ENCODE measurements at regions of chr4 and their contacts with region 1.

Region 1: DNA sequence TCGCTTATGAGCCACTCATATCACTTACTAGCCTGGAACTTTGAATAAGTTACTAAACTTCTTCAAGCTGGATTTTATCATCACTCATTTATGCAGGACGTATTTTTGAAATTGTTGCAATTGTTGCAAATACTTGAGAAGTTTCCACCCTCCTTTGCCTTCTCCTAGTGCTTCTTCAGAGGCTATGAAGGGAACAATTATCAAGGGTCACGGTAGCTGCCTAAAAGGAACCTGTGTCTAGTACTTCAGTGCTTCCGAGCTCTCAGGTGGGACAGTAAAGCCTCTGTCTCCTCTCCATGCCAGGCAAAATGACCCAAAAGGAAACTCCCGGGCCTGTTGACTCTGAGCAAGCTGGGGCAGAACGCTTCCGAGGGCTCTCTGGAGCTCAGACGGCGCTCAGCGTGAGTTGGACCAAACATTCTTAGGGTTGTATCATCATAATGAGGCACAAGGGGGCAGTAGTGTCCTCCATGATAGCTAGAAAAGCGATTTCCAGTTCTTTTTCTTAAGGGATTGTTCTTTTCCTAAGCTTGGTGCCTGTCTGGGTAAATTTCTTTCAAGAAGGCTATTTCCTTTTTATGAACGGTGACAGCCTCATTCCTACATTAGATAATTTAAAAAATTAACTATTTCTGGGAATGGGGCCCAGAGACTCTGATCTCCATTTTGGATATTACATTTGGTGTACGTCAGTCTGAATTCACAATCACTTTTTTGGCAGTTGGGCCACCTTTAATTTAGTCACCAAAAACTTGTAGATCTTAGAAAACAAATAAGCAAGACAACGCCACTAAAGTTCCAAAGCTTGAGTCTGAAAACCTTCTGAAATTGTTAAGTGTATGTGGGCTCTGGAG is 73.1 kb downstream of the PACRGL start:
- DNase-seq: peak in 3 of 4 donors; percentile 34 to 72 (median 59)
- ATAC-seq: peak; percentile 99
- H3K4me3 ChIP-seq: no peak overlapping the region
- H3K27ac ChIP-seq: no peak overlapping the region
- H3K4me1 ChIP-seq: no peaks in the 10 kb centered on the region
- H3K27me3 ChIP-seq: no peaks in the 10 kb centered on the region
- CTCF ChIP-seq: peak; percentile 52 to 54

Region 2: DNA sequence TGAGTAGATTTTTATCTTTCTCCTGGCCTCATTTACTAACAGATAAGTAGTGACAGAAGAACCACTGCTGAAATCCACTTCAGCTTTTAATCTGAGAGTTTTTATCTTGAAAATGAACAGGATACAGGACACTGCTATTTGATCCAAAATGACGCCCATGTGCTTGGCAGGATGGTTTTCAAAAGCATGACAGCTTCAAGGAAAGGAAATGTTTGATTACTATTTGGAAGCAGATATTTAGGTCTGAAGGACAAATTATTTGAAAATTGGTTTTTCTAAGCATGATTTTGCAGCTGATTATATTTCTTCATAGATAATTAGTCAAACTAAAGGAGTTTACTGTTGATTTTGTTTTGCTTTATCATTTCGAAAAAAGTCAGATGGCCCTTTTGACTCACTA is 62.0 kb before region 1 on chr4:
- intact Hi-C with region 1: no loop called
- DNase-seq: no peak
- ATAC-seq: no peak
- H3K4me3 ChIP-seq: no peak overlapping the region
- H3K27ac ChIP-seq: no peak overlapping the region
- H3K4me1 ChIP-seq: no peaks in the 10 kb centered on the region
- H3K27me3 ChIP-seq: no peaks in the 10 kb centered on the region
- CTCF ChIP-seq: no peak

Region 3: GRCh38 chr4:21134994-21135393 is 361.6 kb after region 1 on chr4:
- intact Hi-C with region 1: loop called in 1 of 2 experiments (anchors 10 kb)
- DNase-seq: peak in 1 of 4 donors; percentile 21
- ATAC-seq: peak; percentile 70
- H3K4me3 ChIP-seq: no peak overlapping the region
- H3K27ac ChIP-seq: no peak overlapping the region
- H3K4me1 ChIP-seq: no peaks in the 10 kb centered on the region
- H3K27me3 ChIP-seq: no peaks in the 10 kb centered on the region
- CTCF ChIP-seq: no peak

Region 4: DNA sequence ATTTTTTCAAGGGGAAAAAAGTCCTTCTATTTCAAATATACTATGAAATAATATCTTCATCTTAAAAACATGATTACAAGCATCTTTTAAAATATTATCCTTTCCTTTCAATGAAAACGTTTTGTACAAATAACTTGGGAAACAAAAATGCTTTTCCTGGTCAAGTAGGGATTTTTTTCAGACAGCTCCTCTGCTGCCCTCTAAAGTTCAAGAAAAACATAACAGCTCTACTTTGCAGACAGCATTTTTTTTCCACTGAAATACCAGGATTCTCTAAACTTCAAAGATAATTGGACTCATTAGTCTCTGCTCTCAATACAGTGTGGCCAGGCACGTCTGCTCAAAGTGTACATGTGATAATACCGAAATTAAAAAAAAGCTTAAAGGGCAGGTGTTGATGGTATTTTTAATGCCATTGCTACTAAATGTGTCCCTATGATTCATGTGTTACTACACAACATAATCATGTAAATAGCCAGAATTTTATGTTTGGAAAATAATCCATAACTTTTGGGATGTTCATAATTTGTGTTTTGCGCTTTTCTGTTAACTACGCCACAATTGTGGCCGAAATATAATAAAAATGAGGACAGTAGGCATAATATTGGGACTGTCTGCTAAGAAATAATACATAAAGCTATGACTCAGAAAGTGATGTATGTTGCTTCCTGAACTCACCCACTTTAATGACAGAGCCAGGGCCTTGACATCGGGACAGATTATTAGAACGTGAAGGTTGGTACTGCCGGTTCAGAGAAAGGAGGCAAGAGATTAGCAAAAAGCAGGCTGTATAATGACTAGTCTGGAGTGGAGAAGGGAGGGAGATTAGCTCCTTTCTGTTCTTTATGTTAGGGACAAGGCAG is 696.3 kb after region 1 on chr4:
- intact Hi-C with region 1: loop called in 1 of 2 experiments (anchors 10 kb)
- DNase-seq: peak in 2 of 4 donors; percentile 11 to 16
- ATAC-seq: peak; percentile 52
- H3K4me3 ChIP-seq: no peak overlapping the region
- H3K27ac ChIP-seq: no peak overlapping the region
- H3K4me1 ChIP-seq: no peaks in the 10 kb centered on the region
- H3K27me3 ChIP-seq: peaks cover 0 to 4% of the 10 kb centered on the region in 2 donors
- CTCF ChIP-seq: peak in 1 of 2 donors; percentile 53